ENCODE measurements at regions of chr11 and their contacts with region 1.

Region 1: DNA sequence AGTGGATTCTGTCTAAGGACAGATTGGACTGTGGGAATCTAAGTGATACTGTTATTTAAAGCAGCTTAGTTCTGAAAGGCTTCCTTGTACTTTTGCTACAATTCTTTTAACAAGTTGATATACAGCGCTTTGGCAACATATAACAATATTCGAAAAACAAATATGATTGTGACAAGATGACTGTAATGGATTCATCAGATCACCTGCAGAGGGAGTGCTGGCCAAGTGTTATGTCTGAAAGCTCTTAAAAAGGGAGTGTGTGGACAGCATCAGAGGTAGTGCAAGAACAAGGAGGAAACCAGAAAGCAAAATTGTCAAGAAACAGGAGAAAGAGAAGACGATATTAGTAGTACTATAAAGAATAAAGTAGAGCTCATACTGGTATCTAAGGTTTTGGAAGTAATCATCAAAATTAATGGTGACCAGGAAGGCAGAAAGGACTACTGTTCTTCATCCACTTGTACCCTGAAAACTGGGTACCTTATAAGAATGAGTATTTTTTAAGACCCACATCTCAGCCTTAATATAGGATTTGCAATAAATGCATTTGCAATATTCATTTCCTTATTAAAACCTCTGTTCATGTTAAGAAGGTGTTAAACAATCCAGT is 1112.0 kb upstream of the CCDC90B start:
- DNase-seq: peak; percentile 35
- H3K4me3 Mint-ChIP-seq: no peak overlapping the region
- H3K27ac Mint-ChIP-seq: no peak overlapping the region
- H3K4me1 Mint-ChIP-seq: no peaks in the 10 kb centered on the region
- H3K27me3 Mint-ChIP-seq: peaks cover 2% of the 10 kb centered on the region
- CTCF ChIP-seq: peak; percentile 25

Region 2: GRCh38 chr11:83793332-83793731 is 604.8 kb before region 1 on chr11:
- CTCF ChIA-PET with region 1: no interaction called
- POLR2A ChIA-PET with region 1: no interaction called
- intact Hi-C with region 1: no loop called
- DNase-seq: no peak
- H3K4me3 Mint-ChIP-seq: no peak overlapping the region
- H3K27ac Mint-ChIP-seq: no peak overlapping the region
- H3K4me1 Mint-ChIP-seq: no peaks in the 10 kb centered on the region
- H3K27me3 Mint-ChIP-seq: peaks cover 12% of the 10 kb centered on the region
- CTCF ChIP-seq: no peak

Region 3: DNA sequence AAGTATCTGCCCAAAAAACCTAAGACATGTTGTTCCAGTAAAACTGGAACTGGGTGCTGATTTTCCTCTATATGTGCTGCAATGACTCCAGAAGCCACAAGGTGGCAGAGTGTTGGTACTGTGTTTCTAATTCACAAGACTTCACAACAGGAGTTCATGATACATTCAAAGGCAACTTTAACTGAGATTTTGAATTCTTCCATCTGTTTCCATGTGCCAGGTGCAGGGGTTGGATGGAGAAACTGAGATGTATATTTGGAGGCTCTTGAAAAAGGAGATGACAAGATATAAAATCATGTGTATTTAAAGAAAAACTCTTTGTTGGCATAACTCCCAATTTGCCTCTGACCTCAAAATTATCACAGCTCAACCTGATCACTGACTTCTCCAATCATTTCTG is 13.4 kb before region 1 on chr11:
- CTCF ChIA-PET with region 1: interaction called, 18 read pairs
- POLR2A ChIA-PET with region 1: no interaction called
- intact Hi-C with region 1: no loop called
- DNase-seq: peak; percentile 50
- H3K4me3 Mint-ChIP-seq: no peak overlapping the region
- H3K27ac Mint-ChIP-seq: no peak overlapping the region
- H3K4me1 Mint-ChIP-seq: no peaks in the 10 kb centered on the region
- H3K27me3 Mint-ChIP-seq: peaks cover 14% of the 10 kb centered on the region
- CTCF ChIP-seq: peak; percentile 59

Region 4: GRCh38 chr11:84524422-84525051 is 126.4 kb after region 1 on chr11:
- CTCF ChIA-PET with region 1: interaction called, 3 read pairs
- POLR2A ChIA-PET with region 1: no interaction called
- intact Hi-C with region 1: loop called (anchors 5 kb)
- DNase-seq: peak; percentile 6
- H3K4me3 Mint-ChIP-seq: no peak overlapping the region
- H3K27ac Mint-ChIP-seq: no peak overlapping the region
- H3K4me1 Mint-ChIP-seq: no peaks in the 10 kb centered on the region
- H3K27me3 Mint-ChIP-seq: peaks cover 40% of the 10 kb centered on the region
- CTCF ChIP-seq: peak; percentile 53